Panc1 (cell line): ENCODE measurements at regions of chr2 and their contacts with region 1.

Region 1: GRCh38 chr2:177164584-177165052 is 48.0 kb upstream of the HNRNPA3 start:
- DNase-seq: peak; percentile 84
- ATAC-seq: peak; percentile 76
- H3K4me3 ChIP-seq: peak overlapping the region; percentile 32 to 57
- H3K27ac ChIP-seq: peak overlapping the region; percentile 99
- H3K4me1 ChIP-seq: peaks cover 50% of the 10 kb centered on the region
- H3K27me3 ChIP-seq: no peaks in the 10 kb centered on the region
- CTCF ChIP-seq: peak; percentile 100

Region 2: DNA sequence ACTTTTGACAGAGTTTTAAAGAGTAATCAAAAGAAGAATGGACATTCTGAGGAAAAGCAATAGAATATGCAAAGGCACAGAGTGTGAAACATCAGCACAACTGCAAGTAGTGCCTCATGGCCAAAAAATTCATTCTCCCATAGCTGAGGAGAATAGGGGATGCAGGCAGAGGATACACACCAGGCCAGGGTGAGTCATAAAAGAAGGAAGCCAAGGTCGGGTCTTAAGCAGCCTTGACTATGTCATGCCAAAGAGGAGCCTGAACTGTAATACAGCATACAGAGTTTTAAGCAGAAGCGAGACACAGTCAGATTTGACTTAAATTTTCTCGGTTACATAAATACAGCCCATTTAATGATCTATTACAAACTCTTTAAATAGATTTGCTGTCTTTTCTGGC is 1327.6 kb before region 1 on chr2:
- CTCF ChIA-PET with region 1: no interaction called
- POLR2A ChIA-PET with region 1: no interaction called
- in situ Hi-C with region 1: no loop called
- intact Hi-C with region 1: no loop called
- DNase-seq: no peak
- ATAC-seq: no peak
- H3K4me3 ChIP-seq: no peak overlapping the region
- H3K27ac ChIP-seq: no peak overlapping the region
- H3K4me1 ChIP-seq: no peaks in the 10 kb centered on the region
- H3K27me3 ChIP-seq: no peaks in the 10 kb centered on the region
- CTCF ChIP-seq: no peak

Region 3: GRCh38 chr2:177056481-177056929 is 108.1 kb before region 1 on chr2:
- CTCF ChIA-PET with region 1: no interaction called
- POLR2A ChIA-PET with region 1: no interaction called
- in situ Hi-C with region 1: no loop called
- intact Hi-C with region 1: no loop called
- DNase-seq: no peak
- ATAC-seq: 0 out of 2 replicates have a peak, but pooled peaks have one; percentile 72
- H3K4me3 ChIP-seq: no peak overlapping the region
- H3K27ac ChIP-seq: no peak overlapping the region
- H3K4me1 ChIP-seq: no peaks in the 10 kb centered on the region
- H3K27me3 ChIP-seq: no peaks in the 10 kb centered on the region; the same call in 1 of the 2 replicates
- CTCF ChIP-seq: peak; percentile 40; the same call in 1 of the 2 replicates

Region 4: GRCh38 chr2:177212106-177212890 is 47.7 kb after region 1 on chr2 and contains the start of gene HNRNPA3:
- CTCF ChIA-PET with region 1: interaction called, 3 read pairs
- POLR2A ChIA-PET with region 1: interaction called, 11 read pairs
- in situ Hi-C with region 1: no loop called
- intact Hi-C with region 1: loop called (anchors 2 kb)
- DNase-seq: peak; percentile 93
- ATAC-seq: peak; percentile 92
- H3K4me3 ChIP-seq: peak within 1 kb of the TSS; percentile 89 to 95
- H3K27ac ChIP-seq: peak within 1 kb of the TSS; percentile 100
- H3K4me1 ChIP-seq: peaks cover 24% of the 10 kb centered on the region
- H3K27me3 ChIP-seq: no peaks in the 10 kb centered on the region
- CTCF ChIP-seq: no peak; the same call in 1 of the 2 replicates
- total RNA-seq, gene HNRNPA3: 228 TPM

Region 5: DNA sequence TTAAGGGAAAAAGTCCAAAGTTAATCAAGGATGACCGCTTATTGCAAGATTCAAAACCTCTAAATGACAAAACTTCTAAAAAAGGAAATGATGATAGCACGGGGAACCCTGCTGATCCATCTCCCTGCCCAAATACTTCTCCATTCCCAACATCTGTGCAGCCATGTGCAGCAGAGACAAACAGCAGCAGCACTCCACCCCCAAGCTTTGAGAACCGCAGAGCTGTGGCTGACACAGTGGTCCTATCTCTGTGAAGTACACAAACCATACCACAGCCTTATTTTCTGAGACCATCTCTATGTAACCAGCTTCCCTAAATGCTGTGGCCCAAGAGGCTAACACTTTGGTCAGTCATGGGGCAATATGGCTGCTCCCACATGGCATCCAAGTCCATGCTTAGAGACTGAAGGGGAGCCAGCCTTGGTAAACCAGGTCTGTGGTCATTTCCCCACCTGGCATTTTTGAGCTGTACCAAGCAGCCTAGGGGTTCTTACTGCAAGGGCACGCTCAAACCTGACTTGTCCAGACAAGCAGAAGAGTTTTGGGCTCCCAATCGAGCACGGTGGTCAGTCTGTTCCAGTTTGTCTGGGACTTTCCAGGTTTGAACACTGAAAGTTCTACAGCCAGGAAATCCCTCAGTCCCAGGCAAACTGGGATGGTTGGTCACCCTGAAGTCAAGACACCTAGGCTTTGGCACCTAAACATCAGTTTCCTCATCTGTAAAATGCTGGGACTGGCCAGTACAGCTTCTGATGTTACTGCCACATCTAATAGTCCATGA is 117.0 kb after region 1 on chr2:
- CTCF ChIA-PET with region 1: no interaction called
- POLR2A ChIA-PET with region 1: interaction called, 14 read pairs
- in situ Hi-C with region 1: no loop called
- intact Hi-C with region 1: no loop called
- DNase-seq: no peak
- ATAC-seq: no peak; the same call in 1 of the 2 replicates
- H3K4me3 ChIP-seq: no peak overlapping the region
- H3K27ac ChIP-seq: 0 out of 2 replicates have a peak overlapping the region, but pooled peaks have one; percentile 23
- H3K4me1 ChIP-seq: no peaks in the 10 kb centered on the region; the same call in 1 of the 2 replicates
- H3K27me3 ChIP-seq: no peaks in the 10 kb centered on the region
- CTCF ChIP-seq: no peak

Region 6: DNA sequence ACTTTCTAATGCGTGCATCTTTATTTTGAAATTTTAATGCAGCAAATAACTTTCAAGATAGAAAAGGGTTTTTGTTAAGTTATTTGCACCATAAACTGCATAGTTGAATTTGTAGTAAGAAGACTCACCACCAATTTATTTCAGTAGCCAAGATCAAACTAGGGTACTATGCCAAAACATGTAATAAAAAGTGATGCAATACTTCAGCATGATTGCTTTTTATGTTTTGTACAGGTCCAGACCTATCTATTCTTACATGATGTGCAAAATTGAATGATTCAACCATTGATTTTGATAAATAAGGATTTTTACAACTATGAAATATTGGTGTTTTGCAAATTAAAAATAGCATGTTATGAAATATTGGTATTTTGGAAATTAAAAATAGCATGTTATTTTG is 254.7 kb after region 1 on chr2:
- CTCF ChIA-PET with region 1: no interaction called
- POLR2A ChIA-PET with region 1: no interaction called
- in situ Hi-C with region 1: no loop called
- intact Hi-C with region 1: loop called (anchors 5 kb)
- DNase-seq: no peak
- ATAC-seq: no peak
- H3K4me3 ChIP-seq: no peak overlapping the region
- H3K27ac ChIP-seq: peak overlapping the region; percentile 78; the same call in 1 of the 2 replicates
- H3K4me1 ChIP-seq: peaks cover 11% of the 10 kb centered on the region; the same call in 1 of the 2 replicates
- H3K27me3 ChIP-seq: no peaks in the 10 kb centered on the region
- CTCF ChIP-seq: no peak

Region 7: GRCh38 chr2:177598326-177599138 is 433.9 kb after region 1 on chr2:
- CTCF ChIA-PET with region 1: no interaction called
- POLR2A ChIA-PET with region 1: no interaction called
- in situ Hi-C with region 1: no loop called
- intact Hi-C with region 1: no loop called
- DNase-seq: no peak
- ATAC-seq: no peak
- H3K4me3 ChIP-seq: no peak overlapping the region
- H3K27ac ChIP-seq: no peak overlapping the region
- H3K4me1 ChIP-seq: peaks cover 5% of the 10 kb centered on the region
- H3K27me3 ChIP-seq: peaks cover 5% of the 10 kb centered on the region
- CTCF ChIP-seq: no peak